Endothelial cell of umbilical vein (primary cell): ENCODE measurements at regions of chr20 and their contacts with region 1.

Region 1: DNA sequence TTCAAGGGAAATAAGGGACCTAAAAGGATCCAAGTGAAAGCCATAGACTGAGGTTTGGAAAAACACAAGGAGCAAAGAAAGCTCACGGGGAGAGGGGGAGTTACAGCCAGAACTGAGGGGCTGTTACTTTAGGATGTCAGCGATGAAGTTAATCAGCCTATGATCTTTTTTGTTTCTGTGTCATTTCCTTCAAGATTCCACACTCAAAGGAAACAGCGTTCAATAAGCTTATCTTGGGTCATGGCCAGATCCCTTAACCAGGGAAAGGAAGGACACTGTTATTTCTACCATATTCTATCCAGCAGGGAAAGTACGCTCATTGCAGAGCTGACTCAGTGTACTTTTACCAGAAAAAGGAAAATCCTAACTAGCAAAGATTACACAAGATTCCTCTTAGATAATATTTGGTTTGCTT is 132.8 kb downstream of the PFDN4 start:
- DNase-seq: peak; percentile 96
- H3K4me3 ChIP-seq: peak overlapping the region in 2 of 3 experiments; percentile 12 to 48
- H3K27ac ChIP-seq: peak overlapping the region; percentile 90
- H3K4me1 ChIP-seq: peaks cover 48% of the 10 kb centered on the region
- H3K27me3 ChIP-seq: no peaks in the 10 kb centered on the region
- CTCF ChIP-seq: no peak
- POLR2A ChIP-seq: no peak

Region 2: DNA sequence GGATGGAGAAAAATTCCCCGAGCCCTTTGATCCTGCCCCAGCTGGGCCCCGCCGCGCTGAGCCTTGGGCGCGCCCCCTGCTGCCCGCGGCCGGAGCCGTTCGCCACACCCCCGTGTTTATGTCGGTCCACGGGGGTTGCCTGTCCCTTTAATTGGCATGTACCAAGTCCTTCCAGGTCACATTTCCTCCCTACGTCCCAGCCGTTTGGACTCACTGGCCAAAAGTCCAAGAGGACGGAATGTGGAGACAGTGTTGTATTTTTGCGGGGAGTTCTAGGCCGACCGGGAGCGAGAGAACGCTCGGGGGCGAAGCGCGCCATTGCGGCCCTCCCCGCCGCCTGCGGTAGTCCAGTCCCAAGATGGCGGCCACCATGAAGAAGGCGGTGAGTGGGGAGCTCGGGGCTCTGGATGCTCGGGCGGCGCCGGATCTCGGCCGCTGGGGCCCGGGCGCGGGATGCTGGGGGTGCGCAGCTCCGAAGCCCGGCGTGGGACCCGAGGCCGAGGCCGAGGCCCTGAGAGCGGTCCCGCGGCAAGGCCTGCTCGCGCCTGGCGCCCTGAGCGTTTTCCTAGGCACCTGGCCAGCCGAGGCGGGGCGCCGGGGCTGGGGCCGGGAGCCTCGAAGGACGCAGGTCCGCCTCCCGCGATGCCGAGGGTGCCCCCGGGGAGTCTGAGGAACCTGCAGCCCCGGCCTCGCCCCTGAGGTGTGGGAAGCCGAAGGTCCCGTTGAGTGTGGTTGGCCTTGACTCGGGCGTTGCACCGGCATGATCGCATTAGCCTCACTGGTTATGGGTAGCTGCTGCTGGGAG is 132.7 kb before region 1 on chr20 and contains the start of gene PFDN4:
- CTCF ChIA-PET with region 1: no interaction called
- POLR2A ChIA-PET with region 1: no interaction called
- dilution Hi-C with region 1: no loop called
- intact Hi-C with region 1: loop called (anchors 2 kb)
- DNase-seq: peak; percentile 90
- H3K4me3 ChIP-seq: peak within 1 kb of the TSS; percentile 74 to 88 (median 76)
- H3K27ac ChIP-seq: peak within 1 kb of the TSS; percentile 97
- H3K4me1 ChIP-seq: peaks cover 9% of the 10 kb centered on the region
- H3K27me3 ChIP-seq: no peaks in the 10 kb centered on the region
- CTCF ChIP-seq: peak; percentile 88 to 96
- POLR2A ChIP-seq: peak; percentile 67
- total RNA-seq, gene PFDN4: 37.9 and 44.2 TPM in 2 replicates

Region 3: GRCh38 chr20:54293520-54293921 is 47.2 kb before region 1 on chr20:
- CTCF ChIA-PET with region 1: interaction called, 3 read pairs
- POLR2A ChIA-PET with region 1: no interaction called
- dilution Hi-C with region 1: no loop called
- intact Hi-C with region 1: loop called (anchors 2 kb)
- DNase-seq: peak; percentile 90
- H3K4me3 ChIP-seq: no peak overlapping the region
- H3K27ac ChIP-seq: no peak overlapping the region
- H3K4me1 ChIP-seq: no peaks in the 10 kb centered on the region
- H3K27me3 ChIP-seq: no peaks in the 10 kb centered on the region
- CTCF ChIP-seq: no peak
- POLR2A ChIP-seq: no peak

Region 4: DNA sequence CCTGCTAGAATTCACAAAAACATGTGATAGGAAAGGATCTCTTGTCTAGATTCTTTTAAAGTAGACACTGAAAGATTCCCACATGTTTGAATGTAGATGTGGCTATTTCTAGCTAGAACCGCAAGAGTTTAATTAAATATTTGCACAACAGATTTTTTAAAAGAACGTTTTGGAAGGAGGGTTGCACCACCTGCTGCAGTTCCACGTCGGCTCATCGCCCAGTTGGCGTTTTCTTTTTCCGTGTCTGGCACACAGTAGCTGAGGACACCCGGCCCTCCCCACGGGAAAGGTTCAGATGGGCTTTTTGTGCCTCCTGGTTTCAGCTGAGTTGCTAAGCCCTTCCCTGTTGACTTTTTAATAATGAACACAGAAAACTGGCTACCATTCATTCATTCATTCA is 92.9 kb after region 1 on chr20:
- CTCF ChIA-PET with region 1: no interaction called
- POLR2A ChIA-PET with region 1: no interaction called
- dilution Hi-C with region 1: no loop called
- intact Hi-C with region 1: no loop called
- DNase-seq: no peak
- H3K4me3 ChIP-seq: no peak overlapping the region
- H3K27ac ChIP-seq: no peak overlapping the region
- H3K4me1 ChIP-seq: no peaks in the 10 kb centered on the region
- H3K27me3 ChIP-seq: no peaks in the 10 kb centered on the region
- CTCF ChIP-seq: no peak
- POLR2A ChIP-seq: no peak

Region 5: GRCh38 chr20:54525916-54526590 is 185.4 kb after region 1 on chr20:
- CTCF ChIA-PET with region 1: no interaction called
- POLR2A ChIA-PET with region 1: no interaction called
- dilution Hi-C with region 1: no loop called
- intact Hi-C with region 1: loop called (anchors 5 kb)
- DNase-seq: peak; percentile 39
- H3K4me3 ChIP-seq: no peak overlapping the region
- H3K27ac ChIP-seq: no peak overlapping the region
- H3K4me1 ChIP-seq: peaks cover 4% of the 10 kb centered on the region
- H3K27me3 ChIP-seq: no peaks in the 10 kb centered on the region
- CTCF ChIP-seq: no peak
- POLR2A ChIP-seq: no peak

Region 6: GRCh38 chr20:54649511-54649962 is 308.9 kb after region 1 on chr20:
- CTCF ChIA-PET with region 1: no interaction called
- POLR2A ChIA-PET with region 1: no interaction called
- dilution Hi-C with region 1: no loop called
- intact Hi-C with region 1: loop called (anchors 1 kb)
- DNase-seq: peak; percentile 72
- H3K4me3 ChIP-seq: no peak overlapping the region
- H3K27ac ChIP-seq: no peak overlapping the region
- H3K4me1 ChIP-seq: no peaks in the 10 kb centered on the region
- H3K27me3 ChIP-seq: peaks cover 0 to 3% of the 10 kb centered on the region in 2 experiments
- CTCF ChIP-seq: peak; percentile 78 to 82
- POLR2A ChIP-seq: no peak